Lower leg skin (tissue), 4 donors: ENCODE measurements at regions of chr10 and their contacts with region 1.

Region 1: DNA sequence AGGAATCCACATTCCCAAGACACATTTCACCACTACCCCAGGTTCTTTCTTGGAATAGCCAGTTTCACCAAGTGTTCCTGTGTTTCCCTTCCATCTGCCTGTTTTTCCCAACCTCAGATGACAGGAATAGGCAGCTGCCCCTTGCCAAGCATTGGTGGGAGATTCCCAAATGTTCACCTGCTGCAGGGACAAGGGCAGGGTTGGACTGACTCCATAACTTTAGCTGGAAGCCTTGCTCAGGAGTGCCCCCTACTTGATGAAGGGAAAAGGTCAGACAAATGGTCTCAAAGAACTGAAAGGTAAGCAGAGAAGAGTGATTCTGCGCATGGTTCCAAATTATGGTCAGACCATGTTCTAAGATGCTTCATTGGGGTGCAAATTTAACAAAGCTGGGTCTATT is 45.1 kb upstream of the LYZL1 start:
- DNase-seq: no peak
- H3K4me3 ChIP-seq: no peak overlapping the region
- CTCF ChIP-seq: no peak
- POLR2A ChIP-seq: no peak

Region 2: DNA sequence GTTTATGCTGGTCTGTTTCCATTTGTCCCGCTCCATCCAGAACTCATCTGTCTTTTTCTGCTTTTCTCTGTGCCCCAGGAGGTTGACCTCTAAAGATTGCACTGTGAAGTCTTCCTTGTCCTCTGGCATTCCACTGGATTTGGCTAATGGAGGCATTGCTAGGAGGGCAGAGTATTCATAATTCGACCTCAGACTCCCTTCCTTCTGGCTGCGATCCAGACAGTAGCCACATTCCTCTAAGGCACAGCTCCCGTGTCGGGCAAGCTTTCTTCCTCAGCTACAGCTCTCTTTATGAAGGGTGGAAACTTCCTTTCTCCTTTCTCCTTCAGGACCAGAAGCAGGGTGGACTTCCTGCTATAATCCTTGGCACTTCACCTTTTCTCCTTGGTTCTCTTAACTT is 390.6 kb before region 1 on chr10:
- intact Hi-C with region 1: no loop called
- DNase-seq: no peak
- H3K4me3 ChIP-seq: no peak overlapping the region
- CTCF ChIP-seq: no peak
- POLR2A ChIP-seq: no peak

Region 3: DNA sequence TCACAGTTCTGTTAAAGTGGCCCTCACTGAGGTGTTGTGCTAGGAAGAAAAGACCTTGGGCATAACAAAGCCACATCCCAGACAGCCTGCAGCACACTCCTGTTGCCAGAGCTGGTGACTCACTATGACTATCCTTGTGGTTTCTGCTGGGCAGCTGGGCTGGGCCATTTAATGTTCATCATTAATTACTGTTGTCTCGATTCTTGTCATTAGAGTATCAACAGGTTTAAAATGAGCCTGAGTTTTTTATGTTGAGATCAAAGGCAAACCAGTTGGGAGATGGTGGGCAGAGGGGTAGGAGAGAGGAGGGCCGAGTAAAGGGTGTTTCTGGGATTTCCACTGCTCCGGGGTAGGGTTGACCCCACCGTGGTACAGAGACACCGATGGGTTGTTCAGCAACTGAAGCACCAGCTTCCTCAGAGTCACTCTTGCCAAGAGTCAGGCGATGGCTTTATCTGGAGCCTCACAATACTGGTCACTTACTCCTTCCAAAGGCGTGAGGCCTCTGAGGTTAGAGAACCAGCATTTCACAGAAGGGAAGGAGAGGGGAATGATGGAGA is 83.6 kb before region 1 on chr10:
- intact Hi-C with region 1: no loop called
- DNase-seq: no peak
- H3K4me3 ChIP-seq: no peak overlapping the region
- CTCF ChIP-seq: no peak
- POLR2A ChIP-seq: no peak

Region 4: GRCh38 chr10:29204070-29204800 is 39.5 kb before region 1 on chr10:
- intact Hi-C with region 1: loop called (anchors 2 kb)
- DNase-seq: no peak
- H3K4me3 ChIP-seq: no peak overlapping the region
- CTCF ChIP-seq: no peak
- POLR2A ChIP-seq: no peak

Region 5: DNA sequence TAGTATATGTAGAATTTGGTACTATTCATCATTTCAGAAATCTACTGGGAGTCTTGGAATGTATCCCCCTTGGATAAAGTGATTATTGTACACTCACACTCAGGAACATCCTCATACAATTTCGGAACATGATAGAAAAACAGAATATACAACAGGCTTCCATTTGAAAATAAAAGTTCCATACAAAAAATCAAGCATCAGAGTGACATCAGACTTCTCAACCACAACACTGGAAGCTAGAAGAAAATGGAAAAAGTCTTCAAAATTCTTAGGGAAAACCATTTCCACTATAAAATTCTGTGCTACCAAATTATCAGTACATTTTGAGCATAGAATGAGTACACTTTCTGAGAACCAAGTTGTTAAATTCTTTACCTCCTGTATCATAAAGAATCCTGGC is 53.9 kb after region 1 on chr10:
- intact Hi-C with region 1: no loop called
- DNase-seq: no peak
- H3K4me3 ChIP-seq: no peak overlapping the region
- CTCF ChIP-seq: no peak
- POLR2A ChIP-seq: no peak